Cardiac septum (tissue), 1 donor: ENCODE measurements at regions of chr2 and their contacts with region 1.

Region 1: GRCh38 chr2:42132966-42133641 is 36.0 kb upstream of the EML4 start:
- DNase-seq: peak; percentile 88

Region 2: DNA sequence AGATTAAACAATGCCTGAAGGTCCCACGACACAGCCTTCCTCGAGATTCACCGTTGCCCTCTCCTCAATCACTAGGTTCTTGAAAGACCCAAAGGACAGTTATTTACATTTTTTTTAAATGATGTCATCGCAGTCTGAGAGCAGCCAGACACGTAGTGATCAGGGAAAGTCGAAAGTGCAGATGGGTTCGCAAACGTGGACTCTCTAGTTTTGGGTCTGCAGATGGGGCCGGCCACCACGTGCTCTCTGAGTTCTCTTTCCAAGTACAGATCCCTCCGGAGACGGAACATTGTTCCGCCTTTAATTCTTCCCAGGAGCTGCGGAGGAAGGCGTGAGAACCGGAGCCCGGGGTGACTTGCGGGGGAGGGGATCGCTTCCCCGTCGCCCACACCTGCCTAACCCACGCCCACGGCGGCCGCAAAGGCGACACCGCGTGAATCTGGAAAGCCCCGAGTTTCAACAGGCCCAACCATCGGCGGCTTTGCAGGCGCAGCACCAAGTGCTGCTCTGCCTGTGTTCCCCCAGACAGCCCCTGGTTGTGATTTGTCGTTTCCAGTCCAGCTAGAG is 31.0 kb before region 1 on chr2:
- intact Hi-C with region 1: loop called (anchors 2 kb)
- DNase-seq: peak; percentile 84

Region 3: GRCh38 chr2:42169100-42169873 is 36.2 kb after region 1 on chr2 and contains the start of gene EML4:
- intact Hi-C with region 1: loop called (anchors 5 kb)
- DNase-seq: peak; percentile 96
- total RNA-seq, gene EML4: 7.9 TPM

Region 4: DNA sequence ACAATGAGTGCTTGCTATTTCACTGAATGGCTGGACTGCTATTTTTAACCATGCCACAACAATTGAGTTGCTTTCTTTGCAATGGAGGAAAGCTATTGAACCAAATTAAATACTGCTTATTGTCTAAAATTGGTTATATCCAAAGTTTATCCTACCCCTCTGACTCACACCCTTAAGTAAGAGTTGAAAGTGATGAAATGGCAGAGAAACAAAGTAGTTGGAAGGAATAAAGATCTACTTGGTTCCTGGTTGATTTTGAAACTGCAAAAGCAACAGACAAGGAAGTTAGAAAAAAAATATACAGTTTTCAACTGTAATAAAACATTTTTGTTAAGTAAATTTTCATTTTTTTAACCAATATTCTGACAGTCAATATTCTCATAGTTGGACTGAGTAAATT is 83.6 kb after region 1 on chr2:
- intact Hi-C with region 1: no loop called
- DNase-seq: no peak